Activated CD4-positive, alpha-beta T cell treated with anti-CD3 and anti-CD28 coated beads, Interleukin-2, amount 10 ng/mL, durations not matched to agents 7 days and 5 days (primary cell): ENCODE measurements at regions of chr22 and their contacts with region 1.

Region 1: GRCh38 chr22:20156611-20157429 is 6.0 kb upstream of the CCDC188 start:
- DNase-seq: peak; percentile 86
- H3K4me3 Mint-ChIP-seq: no peak overlapping the region
- H3K27ac Mint-ChIP-seq: peak overlapping the region; percentile 50
- H3K4me1 Mint-ChIP-seq: peaks cover 4% of the 10 kb centered on the region
- H3K27me3 Mint-ChIP-seq: peaks cover 3% of the 10 kb centered on the region

Region 2: DNA sequence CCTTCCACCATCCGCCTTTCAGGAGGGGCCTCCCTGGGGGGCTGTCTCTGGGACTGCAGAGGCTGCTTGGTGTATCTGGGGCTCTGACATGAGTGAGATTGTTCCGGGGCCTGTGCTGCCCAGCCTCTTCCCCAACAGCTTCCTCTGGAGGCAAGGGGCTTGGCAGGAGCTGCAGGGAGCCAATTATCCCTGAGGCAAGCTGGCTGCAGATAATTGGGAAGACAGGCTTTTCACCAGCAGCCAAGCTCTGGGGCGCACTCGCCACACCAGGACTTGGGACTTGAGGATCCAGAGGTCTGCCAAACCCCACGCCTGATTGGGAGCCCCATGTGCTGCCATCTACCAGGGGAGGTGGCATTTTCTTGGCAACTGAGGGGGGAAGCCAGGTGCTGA is 126.8 kb after region 1 on chr22:
- CTCF ChIA-PET with region 1: interaction called, 11 read pairs
- POLR2A ChIA-PET with region 1: no interaction called
- DNase-seq: no peak
- H3K4me3 Mint-ChIP-seq: no peak overlapping the region
- H3K27ac Mint-ChIP-seq: no peak overlapping the region
- H3K4me1 Mint-ChIP-seq: no peaks in the 10 kb centered on the region
- H3K27me3 Mint-ChIP-seq: no peaks in the 10 kb centered on the region